ENCODE measurements at regions of chr5 and their contacts with region 1.

Region 1: DNA sequence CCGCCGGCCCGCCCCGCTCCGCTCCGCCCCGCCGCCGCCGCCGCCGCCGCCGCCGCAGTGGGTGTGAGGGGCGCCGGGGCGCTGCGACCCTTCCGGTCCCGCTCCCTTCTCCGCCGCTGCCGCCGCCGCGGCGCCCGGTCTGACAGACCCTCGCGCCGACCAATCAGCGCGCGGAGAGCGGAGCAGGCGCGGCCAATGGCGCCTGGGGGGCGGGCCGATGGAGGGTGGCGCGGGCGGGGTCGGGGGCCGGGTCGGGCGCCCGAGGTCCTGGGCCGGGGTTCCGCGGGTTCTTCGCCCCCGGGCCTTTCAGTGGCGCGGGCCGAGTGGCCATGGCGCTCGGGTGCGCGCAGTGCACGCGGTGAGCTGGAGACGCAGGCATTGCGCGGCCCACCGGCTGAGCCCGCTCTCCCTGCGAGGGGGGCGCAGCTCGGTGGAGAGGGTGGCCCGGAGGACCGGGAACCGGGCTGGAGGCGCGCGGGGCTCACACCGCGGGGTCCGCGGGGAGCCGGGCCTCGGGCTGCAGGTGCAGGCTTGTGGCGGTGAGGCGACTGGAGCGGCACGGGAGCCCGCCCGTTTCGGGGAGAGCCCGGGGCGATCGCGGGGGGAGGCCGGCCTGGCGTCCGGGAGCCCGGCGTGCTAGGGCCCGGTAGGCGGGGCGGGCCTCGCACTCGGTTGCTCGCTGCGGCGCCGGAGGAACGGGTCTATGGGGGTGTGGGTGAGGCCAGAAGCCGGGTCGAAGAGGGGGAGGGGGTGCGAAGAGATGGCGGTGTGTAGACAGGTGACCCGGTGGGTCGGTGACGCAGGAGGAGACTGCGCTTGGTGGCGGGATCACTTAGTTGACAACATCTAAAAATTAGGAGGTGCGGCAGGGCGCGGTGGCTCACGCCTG is at the start of gene MAPK9:
- DNase-seq: peak; percentile 90 to 97 (median 97)
- ATAC-seq: peak; percentile 89
- H3K4me3 ChIP-seq: peak within 1 kb of the TSS; percentile 93
- H3K27ac ChIP-seq: peak within 1 kb of the TSS; percentile 75
- H3K4me1 ChIP-seq: peaks cover 13 to 37% of the 10 kb centered on the region in 2 experiments; a peak in 4 of 5 replicates
- H3K27me3 ChIP-seq: no peaks in the 10 kb centered on the region
- CTCF ChIP-seq: no peak
- EP300 ChIP-seq: no peak
- POLR2A ChIP-seq: peak; percentile 55
- RAD21 ChIP-seq: no peak
- polyA plus RNA-seq, gene MAPK9: 4.8 to 6.5 TPM

Region 2: GRCh38 chr5:180209137-180209581 is 83.0 kb before region 1 on chr5 and contains the start of gene RASGEF1C:
- CTCF ChIA-PET with region 1: interaction called, 6 read pairs
- POLR2A ChIA-PET with region 1: no interaction called
- in situ Hi-C with region 1: no loop called
- intact Hi-C with region 1: loop called (anchors 10 kb)
- DNase-seq: peak; percentile 86 to 89 (median 88)
- ATAC-seq: peak; percentile 95
- H3K4me3 ChIP-seq: peak within 1 kb of the TSS; percentile 35
- H3K27ac ChIP-seq: no peak within 1 kb of the TSS
- H3K4me1 ChIP-seq: peaks cover 8 to 41% of the 10 kb centered on the region in 2 experiments; a peak in 4 of 5 replicates
- H3K27me3 ChIP-seq: peaks cover 0 to 36% of the 10 kb centered on the region in 2 experiments; a peak in 3 of 5 replicates
- CTCF ChIP-seq: peak in 2 of 3 experiments; percentile 70 to 94; a peak in 5 of 6 replicates
- EP300 ChIP-seq: no peak
- POLR2A ChIP-seq: no peak
- RAD21 ChIP-seq: peak in 1 of 2 experiments; percentile 56; a peak in 3 of 4 replicates
- polyA plus RNA-seq, gene RASGEF1C: not detected

Region 3: DNA sequence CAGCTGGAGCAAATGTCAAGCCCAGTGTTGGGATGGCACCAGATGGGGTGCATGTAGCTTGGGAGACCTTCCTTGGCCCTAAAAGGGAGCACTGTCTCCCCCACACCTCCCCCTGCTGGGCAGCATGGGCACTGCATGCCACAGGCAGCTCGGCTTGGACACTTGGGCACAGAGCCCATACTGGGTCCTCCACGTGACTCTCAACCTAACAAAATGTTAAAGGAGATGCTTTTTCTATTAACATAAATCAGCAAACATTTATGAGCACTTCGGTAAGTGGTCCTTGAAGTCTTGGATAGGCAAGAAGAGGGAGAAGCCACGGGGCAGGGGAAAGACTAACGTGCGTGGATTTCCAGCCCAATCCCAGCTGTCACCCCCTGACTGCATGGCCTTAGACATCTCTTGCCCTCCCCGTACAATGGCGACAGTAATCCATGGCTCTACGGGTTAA is 23.6 kb after region 1 on chr5:
- CTCF ChIA-PET with region 1: interaction called, 5 read pairs
- POLR2A ChIA-PET with region 1: interaction called, 3 read pairs
- in situ Hi-C with region 1: no loop called
- intact Hi-C with region 1: loop called (anchors 1 kb)
- DNase-seq: peak; percentile 68 to 79 (median 72)
- ATAC-seq: peak; percentile 83
- H3K4me3 ChIP-seq: no peak overlapping the region
- H3K27ac ChIP-seq: no peak overlapping the region
- H3K4me1 ChIP-seq: peaks cover 0 to 6% of the 10 kb centered on the region in 2 experiments; a peak in 2 of 5 replicates
- H3K27me3 ChIP-seq: peaks cover 39 to 61% of the 10 kb centered on the region in 2 experiments
- CTCF ChIP-seq: peak; percentile 87 to 97 (median 90)
- EP300 ChIP-seq: no peak
- POLR2A ChIP-seq: no peak
- RAD21 ChIP-seq: peak; percentile 40 to 72

Region 4: DNA sequence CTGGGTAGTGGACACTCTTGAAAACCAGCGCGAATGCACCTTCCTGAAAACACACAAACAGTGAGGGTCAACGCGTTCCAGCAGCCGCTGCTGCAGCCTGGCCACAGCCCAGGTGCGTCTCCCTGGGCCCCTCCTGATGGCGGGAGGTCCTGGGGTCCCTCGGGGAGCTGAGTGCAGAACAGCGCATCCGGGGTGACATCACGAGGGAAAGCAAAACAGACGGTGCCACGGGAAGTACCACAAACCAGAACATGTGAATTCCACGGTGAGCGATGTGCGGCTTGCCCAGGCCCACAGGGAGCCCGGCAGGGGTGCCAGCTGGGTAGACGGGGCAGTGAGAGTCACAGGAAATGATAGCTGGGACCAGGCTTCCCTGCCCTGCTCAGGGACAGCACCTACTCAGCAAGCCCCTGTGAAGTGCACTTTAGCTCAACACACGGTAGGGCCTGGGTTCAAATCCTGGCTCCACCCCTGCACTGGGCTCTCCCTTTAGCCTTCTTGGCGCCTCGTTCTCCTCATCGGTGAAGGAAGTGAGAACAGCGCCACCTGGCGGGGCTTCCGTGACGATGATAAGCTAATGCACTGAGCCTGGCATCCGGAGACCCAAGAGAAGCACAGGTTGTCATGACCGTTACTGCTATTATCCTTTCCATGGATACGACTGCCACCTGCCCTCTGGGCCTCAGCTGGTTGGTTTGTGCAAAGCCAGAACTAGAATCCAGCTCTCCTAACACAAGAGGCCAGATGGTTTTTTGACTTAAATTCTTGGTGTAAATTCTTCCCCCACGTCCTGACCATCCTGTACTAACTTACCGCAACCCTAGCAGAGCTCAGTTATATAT is 36.3 kb after region 1 on chr5:
- CTCF ChIA-PET with region 1: interaction called, 12 read pairs
- POLR2A ChIA-PET with region 1: no interaction called
- in situ Hi-C with region 1: no loop called
- intact Hi-C with region 1: loop called (anchors 1 kb)
- DNase-seq: peak; percentile 76 to 89 (median 81)
- ATAC-seq: peak; percentile 99
- H3K4me3 ChIP-seq: no peak overlapping the region
- H3K27ac ChIP-seq: no peak overlapping the region
- H3K4me1 ChIP-seq: peaks cover 5 to 12% of the 10 kb centered on the region in 2 experiments; a peak in 4 of 5 replicates
- H3K27me3 ChIP-seq: peaks cover 29 to 56% of the 10 kb centered on the region in 2 experiments
- CTCF ChIP-seq: peak; percentile 84 to 89 (median 89)
- EP300 ChIP-seq: no peak
- POLR2A ChIP-seq: no peak
- RAD21 ChIP-seq: peak; percentile 32 to 79; a peak in 2 of 4 replicates

Region 5: DNA sequence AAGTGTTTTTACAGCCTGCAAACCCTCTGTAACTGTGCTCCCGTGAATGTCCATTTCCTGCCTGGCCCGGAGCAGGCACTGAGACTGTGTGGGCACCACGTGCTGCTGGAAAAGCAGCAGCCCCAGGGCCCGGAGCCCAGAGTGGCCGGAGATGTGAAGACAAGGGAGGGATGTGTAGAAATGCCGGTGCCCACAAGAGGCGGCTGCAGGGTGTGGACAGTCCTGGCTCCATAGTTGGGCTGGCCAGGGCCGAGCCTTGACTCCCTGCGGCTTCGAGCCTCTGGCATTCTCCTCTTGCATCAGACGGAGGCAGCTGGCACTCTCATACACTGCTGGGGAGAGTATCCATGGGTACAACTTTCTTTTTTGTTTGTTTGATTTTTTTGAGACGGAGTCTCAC is 74.1 kb after region 1 on chr5:
- CTCF ChIA-PET with region 1: no interaction called
- POLR2A ChIA-PET with region 1: no interaction called
- in situ Hi-C with region 1: no loop called
- intact Hi-C with region 1: no loop called
- DNase-seq: no peak
- ATAC-seq: peak; percentile 31; the same call in 2 of the 3 replicates
- H3K4me3 ChIP-seq: no peak overlapping the region
- H3K27ac ChIP-seq: no peak overlapping the region
- H3K4me1 ChIP-seq: no peaks in the 10 kb centered on the region
- H3K27me3 ChIP-seq: peaks cover 39 to 65% of the 10 kb centered on the region in 2 experiments
- CTCF ChIP-seq: no peak
- EP300 ChIP-seq: no peak
- POLR2A ChIP-seq: no peak
- RAD21 ChIP-seq: no peak

Region 6: DNA sequence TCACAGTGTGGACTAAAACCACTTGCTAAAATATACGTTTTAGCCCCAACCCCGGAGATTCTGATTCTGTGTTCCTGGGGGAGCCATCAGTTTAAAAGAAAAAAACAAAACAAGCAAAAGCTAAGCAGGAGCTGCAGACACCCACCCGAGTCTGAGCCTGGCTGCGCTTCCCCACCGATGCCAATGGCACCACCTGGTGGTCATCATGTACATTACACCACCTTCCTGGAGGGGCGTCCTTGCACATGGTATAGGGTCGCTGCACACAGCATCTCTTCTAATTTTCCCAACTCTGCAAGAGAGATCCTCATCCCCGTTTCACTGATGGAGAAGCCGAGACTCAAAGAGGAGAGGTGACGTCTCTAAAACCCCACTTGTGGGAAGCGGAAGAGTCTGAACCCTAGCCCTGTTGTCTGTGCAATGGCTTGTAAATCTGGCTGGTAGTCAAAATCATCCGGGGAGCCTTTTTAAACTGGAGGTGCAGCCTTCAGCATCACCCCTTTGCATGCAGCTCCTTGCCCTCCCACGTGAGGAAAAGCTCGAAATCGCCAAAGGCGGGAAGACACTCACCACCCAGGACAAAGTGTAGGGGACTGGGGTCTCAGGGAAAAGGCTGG is 178.9 kb after region 1 on chr5:
- CTCF ChIA-PET with region 1: interaction called, 11 read pairs
- POLR2A ChIA-PET with region 1: no interaction called
- in situ Hi-C with region 1: no loop called
- intact Hi-C with region 1: loop called (anchors 2 kb)
- DNase-seq: peak; percentile 72 to 79 (median 76)
- ATAC-seq: peak; percentile 89
- H3K4me3 ChIP-seq: no peak overlapping the region
- H3K27ac ChIP-seq: no peak overlapping the region
- H3K4me1 ChIP-seq: peaks cover 0 to 11% of the 10 kb centered on the region in 2 experiments; a peak in 2 of 5 replicates
- H3K27me3 ChIP-seq: peaks cover 6 to 66% of the 10 kb centered on the region in 2 experiments
- CTCF ChIP-seq: peak; percentile 81 to 89 (median 89)
- EP300 ChIP-seq: no peak
- POLR2A ChIP-seq: no peak
- RAD21 ChIP-seq: peak; percentile 53 to 80

Region 7: GRCh38 chr5:180670586-180671359 is 378.6 kb after region 1 on chr5:
- CTCF ChIA-PET with region 1: interaction called, 12 read pairs
- POLR2A ChIA-PET with region 1: no interaction called
- in situ Hi-C with region 1: no loop called
- intact Hi-C with region 1: no loop called
- DNase-seq: peak; percentile 49 to 73 (median 66)
- ATAC-seq: peak; percentile 76
- H3K4me3 ChIP-seq: no peak overlapping the region
- H3K27ac ChIP-seq: no peak overlapping the region
- H3K4me1 ChIP-seq: peaks cover 18 to 20% of the 10 kb centered on the region in 2 experiments
- H3K27me3 ChIP-seq: peaks cover 9 to 33% of the 10 kb centered on the region in 2 experiments; a peak in 4 of 5 replicates
- CTCF ChIP-seq: peak; percentile 69 to 86 (median 85)
- EP300 ChIP-seq: no peak
- POLR2A ChIP-seq: no peak
- RAD21 ChIP-seq: peak; percentile 47 to 77

Measured in K562 (cell line).